WTC11 (cell line): ENCODE measurements at regions of chr15 and their contacts with region 1.

Region 1: GRCh38 chr15:89750560-89751542 is at the start of gene MESP1:
- DNase-seq: peak; percentile 93
- ATAC-seq: peak; percentile 87
- H3K4me3 Mint-ChIP-seq: peak within 1 kb of the TSS; percentile 62
- H3K27ac Mint-ChIP-seq: no peak within 1 kb of the TSS
- H3K4me1 Mint-ChIP-seq: peaks cover 20% of the 10 kb centered on the region; the same call in 1 of the 2 replicates
- H3K27me3 Mint-ChIP-seq: peaks cover 40% of the 10 kb centered on the region
- CTCF ChIP-seq: no peak
- total RNA-seq, gene MESP1: 0.32 to 0.50 TPM (median 0.41 TPM) in 3 replicates

Region 2: DNA sequence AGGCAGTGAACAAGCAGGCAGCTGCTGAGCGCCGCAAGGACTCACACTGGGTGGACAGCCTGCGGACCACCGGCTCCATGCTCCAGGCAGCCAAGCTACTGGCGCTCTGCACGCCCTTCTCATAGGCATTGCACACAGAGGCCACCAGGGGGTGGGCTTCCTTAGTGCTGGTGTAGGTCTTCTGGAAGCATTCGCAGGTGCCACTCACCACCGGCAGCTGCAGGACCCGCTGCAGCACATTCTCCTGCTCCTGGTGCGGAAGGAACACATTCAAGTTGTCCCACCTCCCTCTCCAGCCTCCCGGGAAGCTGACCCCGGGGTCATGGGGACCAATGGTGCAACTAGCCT is 77.7 kb before region 1 on chr15:
- CTCF ChIA-PET with region 1: interaction called, 10 read pairs
- POLR2A ChIA-PET with region 1: no interaction called
- DNase-seq: peak; percentile 86
- ATAC-seq: peak; percentile 96
- H3K4me3 Mint-ChIP-seq: no peak overlapping the region
- H3K27ac Mint-ChIP-seq: no peak overlapping the region
- H3K4me1 Mint-ChIP-seq: no peaks in the 10 kb centered on the region; the same call in 1 of the 2 replicates
- H3K27me3 Mint-ChIP-seq: peaks cover 2% of the 10 kb centered on the region; the same call in 1 of the 2 replicates
- CTCF ChIP-seq: peak; percentile 67

Region 3: DNA sequence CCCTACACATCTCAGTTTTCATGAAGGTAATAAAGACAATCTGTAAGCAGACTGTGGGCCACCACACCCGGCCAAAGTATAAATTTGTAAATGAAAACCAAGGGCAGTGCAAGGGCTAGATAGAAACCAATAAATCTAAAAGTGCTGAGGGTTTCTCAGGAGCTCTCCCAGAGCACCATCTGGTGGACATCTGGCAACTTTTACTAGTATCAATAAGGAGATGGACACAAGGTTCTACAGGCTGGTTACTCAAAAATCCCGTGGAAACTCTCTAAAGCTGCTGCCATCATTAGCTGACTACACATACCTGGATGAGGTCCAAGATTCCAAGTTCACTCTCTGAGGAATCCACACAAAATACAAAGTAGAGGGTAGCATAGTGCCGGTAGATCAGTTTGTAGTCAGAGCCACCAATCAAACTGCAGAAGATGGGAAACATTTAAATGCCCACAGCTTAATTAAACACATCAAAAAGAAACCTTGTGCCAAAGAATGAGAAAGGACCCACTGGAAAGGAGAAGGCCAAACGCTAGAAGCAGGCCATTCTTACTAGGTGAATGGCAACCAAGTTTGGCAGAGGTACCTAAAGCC is 137.5 kb after region 1 on chr15:
- CTCF ChIA-PET with region 1: interaction called, 16 read pairs
- POLR2A ChIA-PET with region 1: no interaction called
- DNase-seq: no peak
- ATAC-seq: peak; percentile 24; the same call in 1 of the 2 replicates
- H3K4me3 Mint-ChIP-seq: no peak overlapping the region
- H3K27ac Mint-ChIP-seq: no peak overlapping the region
- H3K4me1 Mint-ChIP-seq: peaks cover 6% of the 10 kb centered on the region
- H3K27me3 Mint-ChIP-seq: no peaks in the 10 kb centered on the region
- CTCF ChIP-seq: no peak

Region 4: DNA sequence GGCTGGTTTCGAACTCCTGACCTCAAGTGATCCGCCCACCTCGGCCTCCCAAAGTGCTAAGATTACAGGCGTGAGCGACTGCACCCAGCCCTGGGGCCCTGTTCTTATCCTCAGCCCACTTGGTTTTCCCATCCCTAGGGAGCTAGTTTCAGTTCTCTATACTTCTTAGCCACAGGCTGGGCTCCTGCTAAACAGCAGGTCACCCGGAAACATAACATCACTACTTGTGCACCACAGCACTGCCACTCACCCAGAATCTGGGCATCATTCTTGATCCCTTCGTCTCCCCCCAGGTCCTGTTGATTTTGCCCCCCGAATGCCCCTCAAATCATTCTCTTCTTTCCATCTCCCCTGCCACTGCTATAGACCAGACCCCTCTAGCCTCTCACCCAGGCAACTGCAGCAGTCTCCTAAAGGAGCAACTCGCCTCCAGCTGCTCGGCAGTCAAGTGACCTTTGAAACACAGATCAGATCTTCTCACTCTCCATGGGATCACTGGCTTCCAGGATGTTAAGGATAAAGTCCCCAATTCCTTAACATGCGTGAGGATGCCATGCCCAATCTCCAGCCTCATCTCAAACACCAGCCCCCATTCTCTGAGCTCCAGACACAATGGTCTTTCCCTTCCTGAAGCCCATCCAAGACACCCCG is 148.6 kb after region 1 on chr15:
- CTCF ChIA-PET with region 1: no interaction called
- POLR2A ChIA-PET with region 1: no interaction called
- DNase-seq: no peak
- ATAC-seq: no peak
- H3K4me3 Mint-ChIP-seq: no peak overlapping the region
- H3K27ac Mint-ChIP-seq: peak overlapping the region; percentile 30; the same call in 1 of the 2 replicates
- H3K4me1 Mint-ChIP-seq: peaks cover 11% of the 10 kb centered on the region
- H3K27me3 Mint-ChIP-seq: no peaks in the 10 kb centered on the region
- CTCF ChIP-seq: no peak